ENCODE measurements at regions of chr7 and their contacts with region 1.

Region 1: GRCh38 chr7:38222481-38223096 is 44.5 kb downstream of the STARD3NL start:
- DNase-seq: no peak
- ATAC-seq: peak; percentile 78 to 87
- H3K4me3 ChIP-seq: no peak overlapping the region
- H3K27ac ChIP-seq: no peak overlapping the region
- H3K4me1 ChIP-seq: peaks cover 9% of the 10 kb centered on the region
- H3K27me3 ChIP-seq: no peaks in the 10 kb centered on the region
- CTCF ChIP-seq: peak; percentile 86

Region 2: GRCh38 chr7:38107486-38107893 is 115.1 kb before region 1 on chr7:
- intact Hi-C with region 1: loop called (anchors 5 kb)
- DNase-seq: peak; percentile 50
- ATAC-seq: peak; percentile 90 to 92
- H3K4me3 ChIP-seq: no peak overlapping the region
- H3K27ac ChIP-seq: no peak overlapping the region
- H3K4me1 ChIP-seq: no peaks in the 10 kb centered on the region
- H3K27me3 ChIP-seq: no peaks in the 10 kb centered on the region
- CTCF ChIP-seq: peak; percentile 77

Region 3: GRCh38 chr7:38360776-38361175 is 138.2 kb after region 1 on chr7:
- intact Hi-C with region 1: no loop called
- DNase-seq: no peak
- ATAC-seq: no peak
- H3K4me3 ChIP-seq: no peak overlapping the region
- H3K27ac ChIP-seq: no peak overlapping the region
- H3K4me1 ChIP-seq: peaks cover 5% of the 10 kb centered on the region
- H3K27me3 ChIP-seq: no peaks in the 10 kb centered on the region
- CTCF ChIP-seq: no peak

Region 4: DNA sequence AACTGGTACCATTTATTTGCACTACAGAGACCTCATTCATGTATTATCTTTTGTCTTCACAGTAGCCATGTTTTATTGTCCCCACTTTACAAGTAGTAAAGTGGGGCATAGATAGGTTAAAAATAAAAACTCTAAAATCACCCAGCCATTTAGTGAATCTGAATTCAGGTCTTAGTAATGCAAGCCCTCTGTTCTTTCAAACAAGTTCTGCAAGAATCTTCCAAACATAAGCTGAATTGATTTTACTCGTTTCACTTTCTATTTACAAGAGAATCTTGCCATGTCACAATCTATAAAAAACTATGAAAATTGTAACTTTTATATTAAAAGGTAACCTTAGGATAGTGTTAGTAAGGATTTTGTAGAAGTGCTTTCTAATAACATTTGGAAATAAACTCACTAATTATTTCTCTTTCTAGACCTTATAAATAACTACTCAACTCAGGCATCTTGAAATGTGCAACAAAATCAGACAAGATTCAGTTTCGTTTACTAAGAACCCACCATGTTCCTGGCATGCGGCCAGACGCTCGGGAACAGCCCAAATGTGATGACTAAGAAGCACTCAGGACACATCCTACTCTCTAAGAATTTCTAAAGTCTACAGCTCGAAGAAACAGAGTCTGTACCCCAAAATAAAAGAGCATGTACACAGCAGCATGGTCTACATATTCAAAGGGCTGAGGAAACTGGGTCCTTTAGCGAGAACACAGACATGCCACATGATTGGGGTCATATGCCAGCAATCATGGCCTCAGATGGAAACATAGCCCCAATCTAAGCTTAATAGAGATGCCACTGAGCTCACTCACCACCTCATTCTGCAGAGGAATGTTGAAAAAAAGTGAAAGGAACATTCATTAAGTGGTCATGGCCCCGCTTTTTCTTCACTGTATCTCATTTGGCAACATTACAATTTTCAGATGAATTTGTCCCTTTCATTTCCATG is 241.0 kb after region 1 on chr7:
- intact Hi-C with region 1: no loop called
- DNase-seq: peak; percentile 53
- ATAC-seq: peak in 1 of 2 donors; percentile 33
- H3K4me3 ChIP-seq: no peak overlapping the region
- H3K27ac ChIP-seq: no peak overlapping the region
- H3K4me1 ChIP-seq: no peaks in the 10 kb centered on the region
- H3K27me3 ChIP-seq: no peaks in the 10 kb centered on the region
- CTCF ChIP-seq: no peak

Region 5: DNA sequence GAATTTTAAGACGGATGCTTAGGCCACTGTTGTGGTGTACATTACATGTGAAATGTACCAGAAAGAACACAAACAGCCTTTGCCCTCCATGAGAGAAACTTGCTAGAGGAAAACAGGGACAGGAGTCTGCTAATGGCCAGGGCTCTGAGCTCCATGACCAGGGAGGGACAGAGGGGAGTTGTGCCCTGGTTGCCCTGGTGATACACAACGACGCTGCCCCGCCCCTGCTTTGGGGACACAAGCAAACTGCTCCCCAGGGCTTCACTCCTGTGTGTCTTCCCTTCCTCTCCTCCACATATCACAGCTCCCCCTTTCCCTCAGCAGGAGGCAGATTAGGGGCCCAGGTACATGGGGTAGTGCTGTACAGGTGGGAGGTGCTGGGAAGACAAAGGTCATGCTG is 372.4 kb after region 1 on chr7:
- intact Hi-C with region 1: no loop called
- DNase-seq: no peak
- ATAC-seq: no peak
- H3K4me3 ChIP-seq: no peak overlapping the region
- H3K27ac ChIP-seq: no peak overlapping the region
- H3K4me1 ChIP-seq: no peaks in the 10 kb centered on the region
- H3K27me3 ChIP-seq: no peaks in the 10 kb centered on the region
- CTCF ChIP-seq: no peak